Activated naive CD4-positive, alpha-beta T cell treated with anti-CD3 and anti-CD28 coated beads for 36 hours (primary cell): ENCODE measurements at regions of chr10 and their contacts with region 1.

Region 1: DNA sequence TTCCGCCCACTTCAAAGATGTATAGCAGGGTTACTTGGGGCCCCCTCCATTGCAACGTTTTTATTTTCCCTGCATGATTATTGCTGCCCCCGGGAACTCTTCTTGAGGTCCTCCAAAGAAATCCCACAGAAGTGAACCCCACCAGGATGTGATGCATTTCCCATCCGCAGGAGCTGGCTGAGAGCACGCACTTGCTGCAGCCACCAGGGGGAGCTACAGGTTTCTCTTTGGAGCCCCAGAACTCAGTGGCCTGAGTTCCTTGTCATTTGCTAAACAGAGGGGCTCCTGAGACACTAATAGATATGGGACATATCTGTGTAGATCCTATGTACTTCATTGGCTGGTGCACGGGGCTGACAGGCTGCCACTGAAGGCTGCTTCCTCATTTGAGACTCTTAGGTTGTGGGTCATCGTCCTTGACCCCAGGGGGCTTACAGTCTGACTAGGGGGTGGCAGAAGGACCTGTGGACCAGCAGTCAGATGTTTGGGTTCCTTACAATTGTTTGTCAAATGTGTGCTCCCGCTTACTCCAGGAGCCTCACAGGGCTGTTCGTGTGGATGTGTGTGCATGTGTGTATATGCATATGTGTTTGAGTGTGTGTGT is 52.3 kb upstream of the ENO4 start:
- DNase-seq: peak; percentile 83
- H3K4me3 Mint-ChIP-seq: no peak overlapping the region
- H3K27ac Mint-ChIP-seq: no peak overlapping the region
- H3K4me1 Mint-ChIP-seq: peaks cover 5% of the 10 kb centered on the region
- H3K27me3 Mint-ChIP-seq: peaks cover 24% of the 10 kb centered on the region

Region 2: DNA sequence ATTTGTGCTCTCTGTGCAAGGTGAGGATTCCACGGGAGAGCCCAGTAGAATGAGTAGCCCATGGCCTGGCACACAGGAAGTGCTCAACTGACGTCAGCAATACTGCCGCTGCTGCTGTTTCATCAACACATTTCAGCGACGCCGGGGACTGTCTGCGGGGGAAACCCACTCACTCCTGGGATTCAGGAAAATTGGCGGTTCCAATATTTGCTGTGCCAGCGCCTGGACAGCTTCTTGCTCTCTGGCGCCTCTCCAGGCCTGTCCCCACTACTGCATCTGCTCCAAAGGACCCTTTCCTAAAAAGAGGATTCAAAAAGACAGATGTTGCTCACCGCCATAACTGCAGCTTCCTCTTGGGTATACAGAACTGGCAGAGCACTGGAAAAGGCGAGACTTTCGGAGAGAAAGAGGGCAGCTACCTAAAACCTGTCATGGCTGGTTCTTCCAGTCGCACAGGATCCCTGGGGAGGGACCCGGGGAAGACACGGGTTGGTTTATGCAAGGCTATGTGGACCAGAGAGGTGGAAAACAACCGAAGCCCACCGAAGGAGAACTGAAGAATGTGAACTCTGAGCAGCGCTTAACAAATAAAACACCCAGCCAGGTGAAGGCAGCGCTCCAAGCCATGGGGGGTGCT is 12.6 kb after region 1 on chr10:
- CTCF ChIA-PET with region 1: interaction called, 10 read pairs
- intact Hi-C with region 1: no loop called
- DNase-seq: no peak
- H3K4me3 Mint-ChIP-seq: no peak overlapping the region
- H3K27ac Mint-ChIP-seq: no peak overlapping the region
- H3K4me1 Mint-ChIP-seq: no peaks in the 10 kb centered on the region
- H3K27me3 Mint-ChIP-seq: peaks cover 18% of the 10 kb centered on the region

Region 3: DNA sequence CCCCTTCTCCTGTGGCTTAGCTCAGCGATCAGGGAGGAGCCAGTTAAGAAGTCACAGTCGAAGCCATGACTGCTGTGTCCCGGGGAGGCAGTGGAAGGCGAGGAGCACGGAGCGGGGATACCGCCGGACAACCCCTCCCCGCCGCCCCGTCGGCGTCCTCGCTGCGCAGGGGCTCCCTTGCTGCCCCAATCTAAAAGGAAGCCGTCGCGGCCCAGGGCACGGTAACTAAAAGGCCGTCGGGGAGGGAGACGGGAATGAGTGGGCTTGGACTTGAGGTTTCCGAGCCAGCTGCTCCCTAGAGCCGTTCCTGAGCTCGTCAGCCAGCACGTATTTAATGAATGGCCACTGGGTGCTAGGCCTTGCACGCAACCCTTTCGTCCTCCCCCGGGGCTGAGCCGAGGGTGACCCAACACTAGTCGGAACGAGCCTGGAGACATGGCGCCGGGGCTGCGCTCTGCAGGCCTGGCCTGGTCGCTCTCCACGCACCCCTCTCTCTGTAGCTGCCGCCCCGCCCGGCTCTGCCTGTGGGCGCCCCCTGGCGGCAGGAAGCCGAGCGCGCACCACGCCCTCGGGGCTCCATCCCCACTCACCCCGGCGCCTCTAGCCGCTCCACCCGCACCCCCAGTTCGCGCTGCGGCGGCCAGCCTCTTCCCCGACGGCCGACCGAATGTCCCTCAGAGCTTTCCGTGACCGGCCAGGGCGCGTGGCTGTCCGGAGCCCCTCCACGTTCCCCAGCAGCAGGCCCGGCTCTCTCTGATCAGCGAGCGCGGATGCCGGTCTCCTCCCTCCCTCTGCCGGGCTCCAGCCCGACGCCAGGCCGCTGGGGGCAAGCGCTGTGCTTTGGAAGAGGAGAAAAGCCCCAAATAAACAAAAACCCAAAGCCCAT is 371.0 kb after region 1 on chr10:
- CTCF ChIA-PET with region 1: interaction called, 98 read pairs
- intact Hi-C with region 1: no loop called
- DNase-seq: peak; percentile 65
- H3K4me3 Mint-ChIP-seq: no peak overlapping the region
- H3K27ac Mint-ChIP-seq: no peak overlapping the region
- H3K4me1 Mint-ChIP-seq: peaks cover 44% of the 10 kb centered on the region
- H3K27me3 Mint-ChIP-seq: peaks cover 77% of the 10 kb centered on the region